GM12878 (cell line): ENCODE measurements at regions of chr9 and their contacts with region 1.

Region 1: DNA sequence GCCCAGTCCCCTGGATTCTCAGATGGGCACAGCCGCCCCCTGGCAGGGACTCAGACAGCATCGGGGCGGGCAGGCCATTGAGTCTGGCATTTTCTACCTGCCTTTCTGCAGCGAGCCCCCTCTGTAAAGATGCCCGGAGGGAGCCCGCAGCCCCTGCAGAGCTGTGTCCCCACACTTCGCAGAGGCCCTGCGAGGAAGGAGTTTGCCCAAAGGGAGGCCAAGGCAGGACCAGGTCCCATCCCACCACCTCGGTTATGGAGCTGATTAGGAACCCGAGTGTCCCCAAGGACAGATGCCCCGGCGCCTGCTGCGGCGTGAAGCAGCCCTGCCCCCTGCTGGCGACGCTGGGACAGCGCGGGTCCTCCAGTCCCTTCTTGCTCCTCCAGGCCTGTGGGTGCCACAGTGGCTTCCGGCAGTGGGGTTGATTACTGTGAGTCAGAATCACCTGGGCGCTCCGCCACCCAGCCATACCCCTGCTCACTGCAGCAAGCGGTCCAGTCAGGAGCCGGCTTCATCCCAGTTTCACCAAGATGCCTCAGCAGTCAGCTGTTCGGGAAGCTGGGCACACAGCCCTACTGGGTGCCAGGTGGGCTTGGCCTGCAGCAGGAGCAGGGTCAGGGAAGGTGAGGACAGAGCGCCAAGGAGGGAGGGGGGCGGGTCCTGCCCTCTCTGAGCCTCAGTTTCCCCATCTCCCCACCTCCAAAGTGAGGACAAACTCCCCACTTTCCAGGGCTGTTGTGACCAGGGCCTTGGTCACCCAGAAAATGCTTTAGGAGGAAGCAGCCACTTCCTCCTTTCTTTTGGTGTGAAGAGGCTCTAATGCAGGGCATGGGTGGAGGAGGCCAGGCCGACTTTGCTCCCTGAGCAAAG is 117.1 kb downstream of the RXRA start:
- DNase-seq: peak; percentile 37
- ATAC-seq: peak; percentile 98
- H3K4me3 ChIP-seq: no peak overlapping the region
- H3K27ac ChIP-seq: no peak overlapping the region
- H3K4me1 ChIP-seq: peaks cover 6% of the 10 kb centered on the region
- H3K27me3 ChIP-seq: no peaks in the 10 kb centered on the region; a peak in 1 of 4 replicates
- CTCF ChIP-seq: peak; percentile 97 to 99 (median 98); a peak in 5 of 6 replicates
- EP300 ChIP-seq: no peak
- POLR2A ChIP-seq: 0 out of 2 replicates have a peak, but pooled peaks have one; percentile 15
- RAD21 ChIP-seq: peak; percentile 97

Region 2: GRCh38 chr9:134171316-134172197 is 271.8 kb before region 1 on chr9:
- CTCF ChIA-PET with region 1: interaction called, 22 read pairs
- POLR2A ChIA-PET with region 1: no interaction called
- RAD21 ChIA-PET with region 1: interaction called, 22 read pairs
- SMC1A ChIA-PET with region 1: interaction called, 14 read pairs
- in situ Hi-C with region 1: loop called (anchors 5 kb)
- intact Hi-C with region 1: loop called (anchors 1 kb)
- DNase-seq: no peak
- ATAC-seq: no peak
- H3K4me3 ChIP-seq: no peak overlapping the region
- H3K27ac ChIP-seq: no peak overlapping the region
- H3K4me1 ChIP-seq: no peaks in the 10 kb centered on the region
- H3K27me3 ChIP-seq: no peaks in the 10 kb centered on the region
- CTCF ChIP-seq: no peak
- EP300 ChIP-seq: no peak
- POLR2A ChIP-seq: no peak
- RAD21 ChIP-seq: no peak

Region 3: DNA sequence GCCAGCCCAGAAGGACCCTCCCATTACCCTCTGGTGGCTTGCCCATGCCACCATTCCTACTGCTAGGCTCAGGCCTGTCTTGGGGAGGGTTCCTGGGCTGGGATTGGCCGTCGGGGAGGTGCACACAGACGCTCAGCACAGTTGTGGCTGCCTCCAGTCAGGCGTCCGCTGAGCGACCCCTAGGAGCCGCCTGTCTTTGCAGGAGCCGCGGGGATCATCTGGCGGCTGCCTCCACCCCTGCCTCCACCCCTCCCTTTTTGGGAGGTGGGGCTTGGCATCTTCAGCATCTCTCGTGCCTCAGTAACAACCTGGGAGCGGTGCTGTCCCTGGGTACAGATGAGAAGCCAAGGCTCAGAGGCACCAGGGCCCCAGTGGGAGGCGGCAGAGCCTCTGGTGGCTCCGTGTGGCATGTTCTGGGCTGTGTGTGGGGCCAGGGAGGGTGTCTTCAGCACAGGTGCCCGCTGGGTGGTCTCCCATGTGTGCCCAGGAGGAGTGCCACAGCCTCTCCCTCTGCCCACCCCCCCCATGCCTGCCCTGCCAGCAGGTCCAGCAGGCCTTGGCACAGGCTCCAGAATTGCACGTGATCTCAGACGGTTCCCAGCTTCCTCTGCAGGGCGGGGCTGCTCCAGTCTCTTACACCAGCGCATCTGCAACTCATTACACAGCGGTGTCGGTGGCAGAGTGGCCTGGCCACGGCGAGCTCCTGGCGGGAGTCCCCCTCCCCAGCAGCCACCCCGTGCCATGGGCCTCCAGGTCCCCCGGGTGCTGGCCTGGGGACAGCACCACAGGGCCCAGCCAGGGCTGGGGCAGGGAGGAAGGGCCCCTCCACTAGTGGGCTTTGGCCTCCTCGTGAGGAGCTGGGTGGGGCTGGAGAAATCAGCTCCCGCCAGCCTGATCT is 77.4 kb before region 1 on chr9:
- CTCF ChIA-PET with region 1: interaction called, 31 read pairs
- POLR2A ChIA-PET with region 1: no interaction called
- RAD21 ChIA-PET with region 1: interaction called, 15 read pairs
- SMC1A ChIA-PET with region 1: interaction called, 5 read pairs
- in situ Hi-C with region 1: no loop called
- intact Hi-C with region 1: loop called (anchors 1 kb)
- DNase-seq: no peak
- ATAC-seq: peak; percentile 24; the same call in 2 of the 3 replicates
- H3K4me3 ChIP-seq: no peak overlapping the region
- H3K27ac ChIP-seq: no peak overlapping the region
- H3K4me1 ChIP-seq: no peaks in the 10 kb centered on the region
- H3K27me3 ChIP-seq: no peaks in the 10 kb centered on the region
- CTCF ChIP-seq: no peak
- EP300 ChIP-seq: no peak
- POLR2A ChIP-seq: no peak
- RAD21 ChIP-seq: no peak

Region 4: DNA sequence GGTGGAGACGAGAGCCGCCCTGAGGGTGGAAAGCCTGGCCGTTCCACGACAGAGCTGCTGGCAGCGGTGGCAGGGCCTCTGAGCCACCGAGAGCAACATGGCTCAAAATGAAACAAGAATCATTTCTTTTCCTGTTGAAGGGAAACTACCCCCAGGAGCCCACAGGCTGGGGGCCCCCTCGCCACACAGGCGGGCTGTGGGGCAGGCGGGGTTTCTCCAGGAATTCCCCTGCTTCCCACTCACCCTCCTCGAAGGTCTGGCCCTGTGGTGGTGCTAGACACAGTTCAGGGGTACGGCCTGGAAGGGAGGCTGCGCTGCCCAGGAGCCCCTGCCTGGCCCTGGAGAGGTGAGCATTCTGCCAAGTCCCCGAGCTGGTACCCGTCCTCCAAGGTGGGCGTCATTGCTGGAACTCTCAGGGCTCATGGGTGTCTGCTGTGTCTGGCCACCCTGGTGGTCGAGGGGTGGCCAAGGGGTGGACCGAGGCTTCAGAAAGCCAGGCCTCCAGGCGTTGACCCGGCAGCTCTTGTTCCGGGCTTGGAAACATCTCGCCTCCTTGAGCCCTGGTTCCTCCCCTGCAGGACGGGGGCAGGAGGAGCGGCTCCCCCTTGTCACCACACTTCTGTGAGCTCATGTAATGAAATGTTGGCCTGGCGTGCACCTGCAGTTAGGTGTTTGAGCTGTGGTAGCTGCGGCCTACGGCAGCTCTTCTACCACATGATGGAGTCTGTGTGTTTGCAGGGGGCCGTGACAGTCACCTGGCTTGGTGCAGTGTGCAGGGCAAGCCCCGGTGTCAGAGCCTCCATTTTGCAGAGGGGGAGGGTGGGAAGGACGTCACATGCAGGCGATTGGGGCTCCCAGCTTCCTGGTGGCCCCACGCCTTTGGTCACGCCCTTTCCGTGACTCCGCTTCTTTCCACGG is 51.8 kb before region 1 on chr9:
- CTCF ChIA-PET with region 1: interaction called, 12 read pairs
- POLR2A ChIA-PET with region 1: no interaction called
- RAD21 ChIA-PET with region 1: interaction called, 16 read pairs
- SMC1A ChIA-PET with region 1: interaction called, 4 read pairs
- in situ Hi-C with region 1: no loop called
- intact Hi-C with region 1: loop called (anchors 5 kb)
- DNase-seq: peak; percentile 69
- ATAC-seq: peak; percentile 72
- H3K4me3 ChIP-seq: peak overlapping the region; percentile 79
- H3K27ac ChIP-seq: peak overlapping the region; percentile 98
- H3K4me1 ChIP-seq: peaks cover 51% of the 10 kb centered on the region
- H3K27me3 ChIP-seq: no peaks in the 10 kb centered on the region
- CTCF ChIP-seq: peak in 1 of 3 experiments; percentile 9; a peak in 1 of 6 replicates
- EP300 ChIP-seq: peak; percentile 74 to 92
- POLR2A ChIP-seq: no peak
- RAD21 ChIP-seq: 0 out of 2 replicates have a peak, but pooled peaks have one; percentile 10

Region 5: DNA sequence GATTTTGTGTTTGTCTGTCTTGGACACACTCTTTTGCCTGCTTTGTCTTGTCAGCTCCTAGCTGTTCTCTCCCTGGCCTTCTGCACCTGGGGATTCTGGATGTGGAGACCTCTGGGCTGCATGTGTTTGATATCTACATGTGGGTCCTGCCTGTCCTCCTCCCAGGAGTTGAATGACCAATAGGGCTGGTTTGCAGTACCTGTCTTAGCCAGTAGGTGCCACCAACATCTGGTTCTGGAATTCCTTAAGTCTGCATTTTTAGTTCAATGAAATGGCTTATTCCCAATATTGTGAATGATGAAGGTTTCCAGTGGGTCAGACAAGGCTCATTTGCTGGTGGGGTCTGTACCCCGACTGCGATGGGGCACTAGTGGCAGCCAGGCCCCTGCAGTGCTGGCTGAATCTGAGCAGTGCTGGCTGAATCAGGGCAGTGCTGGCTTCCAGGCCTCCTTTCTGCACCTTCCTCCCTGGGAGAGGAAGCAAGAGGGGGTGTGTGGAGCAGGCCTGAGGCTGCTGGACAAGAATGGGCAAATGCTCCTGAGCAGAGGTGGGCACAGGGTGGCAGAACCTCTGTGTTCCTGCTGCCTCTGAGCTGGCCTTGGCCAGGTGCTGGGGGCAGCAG is 43.9 kb before region 1 on chr9:
- CTCF ChIA-PET with region 1: interaction called, 5 read pairs
- POLR2A ChIA-PET with region 1: no interaction called
- RAD21 ChIA-PET with region 1: interaction called, 11 read pairs
- SMC1A ChIA-PET with region 1: interaction called, 4 read pairs
- in situ Hi-C with region 1: no loop called
- intact Hi-C with region 1: loop called (anchors 5 kb)
- DNase-seq: no peak
- ATAC-seq: no peak
- H3K4me3 ChIP-seq: no peak overlapping the region
- H3K27ac ChIP-seq: no peak overlapping the region
- H3K4me1 ChIP-seq: peaks cover 41% of the 10 kb centered on the region
- H3K27me3 ChIP-seq: no peaks in the 10 kb centered on the region
- CTCF ChIP-seq: peak; percentile 34 to 84 (median 71)
- EP300 ChIP-seq: no peak
- POLR2A ChIP-seq: no peak
- RAD21 ChIP-seq: peak; percentile 20; the same call in 1 of the 2 replicates